ENCODE measurements at regions of chr2 and their contacts with region 1.

Region 1: GRCh38 chr2:218360447-218360846 is 3.8 kb downstream of the CATIP start:
- DNase-seq: no peak
- H3K4me3 ChIP-seq: no peak overlapping the region
- H3K4me3 Mint-ChIP-seq: no peak overlapping the region
- H3K27ac ChIP-seq: no peak overlapping the region
- H3K27ac Mint-ChIP-seq: no peak overlapping the region
- H3K4me1 ChIP-seq: peaks cover 6% of the 10 kb centered on the region
- H3K4me1 Mint-ChIP-seq: peaks cover 0 to 4% (median 2%) of the 10 kb centered on the region in 4 donors
- H3K27me3 ChIP-seq: no peaks in the 10 kb centered on the region
- H3K27me3 Mint-ChIP-seq: no peaks in the 10 kb centered on the region

Region 2: DNA sequence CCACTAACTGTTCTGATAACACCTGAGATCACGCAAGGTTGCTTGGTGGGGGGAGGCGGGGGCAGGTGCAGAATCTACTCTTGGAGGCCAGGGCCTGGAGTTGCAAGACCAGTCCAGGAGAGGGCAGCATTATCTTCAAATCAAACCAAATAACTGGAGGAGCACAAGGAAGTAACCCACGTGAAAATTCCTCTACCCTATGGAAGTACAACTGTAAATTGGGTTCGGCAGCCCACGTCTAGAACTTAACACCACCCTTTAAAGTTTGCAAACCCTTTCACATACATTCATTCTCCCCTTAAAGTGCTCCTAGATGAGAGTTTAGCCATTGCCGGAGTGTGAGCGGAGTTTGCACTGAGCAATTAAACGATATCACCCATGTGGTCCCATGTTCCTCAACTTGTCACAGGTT is 174.1 kb before region 1 on chr2:
- CTCF ChIA-PET with region 1: interaction called, 5 read pairs
- POLR2A ChIA-PET with region 1: interaction called, 3 read pairs
- intact Hi-C with region 1: loop called (anchors 1 kb)
- DNase-seq: peak; percentile 68 to 79 (median 73)
- H3K4me3 ChIP-seq: no peak overlapping the region
- H3K4me3 Mint-ChIP-seq: peak overlapping the region in 1 of 8 donors; percentile 3
- H3K27ac ChIP-seq: no peak overlapping the region
- H3K27ac Mint-ChIP-seq: peak overlapping the region in 2 of 7 donors; percentile 24 to 44
- H3K4me1 ChIP-seq: peaks cover 8% of the 10 kb centered on the region
- H3K4me1 Mint-ChIP-seq: peaks cover 5 to 8% (median 7%) of the 10 kb centered on the region in 4 donors
- H3K27me3 ChIP-seq: no peaks in the 10 kb centered on the region
- H3K27me3 Mint-ChIP-seq: peaks cover 0 to 1% of the 10 kb centered on the region in 2 donors

Region 3: GRCh38 chr2:218252509-218253231 is 107.8 kb before region 1 on chr2:
- CTCF ChIA-PET with region 1: no interaction called
- POLR2A ChIA-PET with region 1: no interaction called
- intact Hi-C with region 1: no loop called
- DNase-seq: no peak
- H3K4me3 ChIP-seq: no peak overlapping the region
- H3K4me3 Mint-ChIP-seq: no peak overlapping the region
- H3K27ac ChIP-seq: no peak overlapping the region
- H3K27ac Mint-ChIP-seq: peak overlapping the region in 6 of 7 donors; percentile 17 to 53 (median 34)
- H3K4me1 ChIP-seq: peaks cover 9% of the 10 kb centered on the region
- H3K4me1 Mint-ChIP-seq: peaks cover 9 to 22% (median 13%) of the 10 kb centered on the region in 4 donors
- H3K27me3 ChIP-seq: no peaks in the 10 kb centered on the region
- H3K27me3 Mint-ChIP-seq: no peaks in the 10 kb centered on the region

Region 4: DNA sequence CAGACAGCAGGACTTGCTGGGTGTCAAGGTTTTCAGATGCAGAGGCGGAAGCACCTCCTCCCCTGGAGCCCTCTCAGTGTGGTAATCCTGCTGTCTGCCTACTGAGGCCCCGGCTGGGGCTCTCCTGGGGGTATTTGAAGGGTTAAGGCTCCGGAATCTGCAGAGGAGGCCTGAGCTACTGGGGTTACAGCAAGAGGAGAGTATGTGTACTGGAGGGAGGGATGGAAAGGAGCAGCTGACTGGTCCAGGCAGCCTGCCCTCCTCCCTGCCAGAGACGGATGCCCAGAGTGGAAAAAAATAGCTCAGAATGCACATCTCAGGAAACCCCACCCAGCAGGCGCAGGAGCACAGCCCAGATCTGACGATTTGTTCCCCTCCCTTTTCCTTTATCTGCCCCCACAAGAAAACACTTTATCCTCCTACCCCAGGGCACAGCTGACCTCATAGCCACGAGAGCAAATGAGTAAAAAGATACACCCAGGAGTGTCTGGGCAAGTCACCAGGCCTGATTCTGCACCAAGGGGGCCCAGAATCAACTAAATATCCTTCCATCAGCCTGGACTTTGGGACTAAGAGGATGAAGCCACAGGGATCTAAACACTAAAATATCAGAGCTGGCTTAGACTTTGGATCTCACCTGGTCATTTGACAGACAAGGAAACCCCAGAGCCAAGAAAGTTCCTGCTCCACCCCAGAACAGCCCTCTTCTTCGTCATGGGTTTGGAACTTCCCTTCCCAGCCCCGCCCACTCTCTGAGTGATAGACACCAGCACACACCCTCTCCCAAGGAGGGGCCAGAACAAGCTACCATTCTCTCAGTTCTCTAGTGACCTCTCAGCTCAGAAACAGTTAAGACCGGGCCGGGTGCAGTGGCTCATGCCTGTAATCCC is 73.6 kb before region 1 on chr2:
- CTCF ChIA-PET with region 1: interaction called, 151 read pairs
- POLR2A ChIA-PET with region 1: interaction called, 14 read pairs
- intact Hi-C with region 1: loop called (anchors 1 kb)
- DNase-seq: peak; percentile 84 to 97 (median 87)
- H3K4me3 ChIP-seq: peak overlapping the region; percentile 53 to 86
- H3K4me3 Mint-ChIP-seq: peak overlapping the region; percentile 90 to 97 (median 91)
- H3K27ac ChIP-seq: peak overlapping the region; percentile 94
- H3K27ac Mint-ChIP-seq: peak overlapping the region; percentile 98 to 100 (median 99)
- H3K4me1 ChIP-seq: peaks cover 92% of the 10 kb centered on the region
- H3K4me1 Mint-ChIP-seq: peaks cover 55 to 95% (median 73%) of the 10 kb centered on the region in 4 donors
- H3K27me3 ChIP-seq: no peaks in the 10 kb centered on the region
- H3K27me3 Mint-ChIP-seq: no peaks in the 10 kb centered on the region

Region 5: DNA sequence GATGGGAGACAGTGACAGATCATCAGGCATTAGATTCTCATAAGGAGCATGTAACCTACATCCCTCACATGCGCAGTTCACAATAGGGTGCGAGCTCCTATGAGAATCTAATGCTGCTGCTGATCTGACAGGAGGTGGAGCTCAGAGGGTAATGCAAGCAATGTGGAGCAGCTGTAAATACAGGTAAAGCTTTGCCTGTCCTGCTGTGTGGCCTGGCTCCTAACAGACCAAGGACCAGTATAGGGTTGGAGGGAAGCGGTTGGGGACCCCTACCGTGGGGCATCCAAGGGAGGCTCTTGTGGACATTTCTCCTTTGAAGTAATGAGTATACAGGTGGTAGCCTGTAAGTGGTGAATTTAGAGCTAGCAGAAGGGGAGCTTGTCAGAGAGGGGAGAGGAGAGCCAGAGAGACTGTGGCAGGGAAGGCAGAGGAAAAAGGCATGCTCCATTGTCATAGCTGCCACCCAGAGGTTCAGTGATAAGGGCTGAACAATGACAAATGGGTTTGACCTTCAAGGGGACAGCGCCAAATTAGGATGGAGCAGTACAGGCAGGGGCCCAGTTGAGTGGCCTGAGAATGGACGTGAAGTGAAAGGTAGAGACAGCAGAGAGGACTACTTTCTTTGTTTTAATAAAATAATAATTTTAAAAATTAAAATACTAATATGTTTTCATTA is 52.9 kb before region 1 on chr2:
- CTCF ChIA-PET with region 1: interaction called, 136 read pairs
- POLR2A ChIA-PET with region 1: interaction called, 3 read pairs
- intact Hi-C with region 1: no loop called
- DNase-seq: no peak
- H3K4me3 ChIP-seq: no peak overlapping the region
- H3K4me3 Mint-ChIP-seq: no peak overlapping the region
- H3K27ac ChIP-seq: no peak overlapping the region
- H3K27ac Mint-ChIP-seq: peak overlapping the region in 1 of 7 donors; percentile 29
- H3K4me1 ChIP-seq: no peaks in the 10 kb centered on the region
- H3K4me1 Mint-ChIP-seq: peaks cover 2 to 5% (median 3%) of the 10 kb centered on the region in 4 donors
- H3K27me3 ChIP-seq: no peaks in the 10 kb centered on the region
- H3K27me3 Mint-ChIP-seq: peaks cover 0 to 1% of the 10 kb centered on the region in 2 donors

Region 6: GRCh38 chr2:218319813-218320365 is 40.6 kb before region 1 on chr2:
- CTCF ChIA-PET with region 1: interaction called, 26 read pairs
- POLR2A ChIA-PET with region 1: interaction called, 4 read pairs
- intact Hi-C with region 1: loop called (anchors 5 kb)
- DNase-seq: no peak
- H3K4me3 ChIP-seq: no peak overlapping the region
- H3K4me3 Mint-ChIP-seq: peak overlapping the region in 1 of 8 donors; percentile 46
- H3K27ac ChIP-seq: no peak overlapping the region
- H3K27ac Mint-ChIP-seq: peak overlapping the region in 2 of 7 donors; percentile 8 to 80
- H3K4me1 ChIP-seq: peaks cover 48% of the 10 kb centered on the region
- H3K4me1 Mint-ChIP-seq: peaks cover 33 to 69% (median 50%) of the 10 kb centered on the region in 4 donors
- H3K27me3 ChIP-seq: no peaks in the 10 kb centered on the region
- H3K27me3 Mint-ChIP-seq: no peaks in the 10 kb centered on the region

Region 7: GRCh38 chr2:218438601-218438995 is 78.2 kb after region 1 on chr2:
- CTCF ChIA-PET with region 1: no interaction called
- POLR2A ChIA-PET with region 1: no interaction called
- intact Hi-C with region 1: no loop called
- DNase-seq: no peak
- H3K4me3 ChIP-seq: no peak overlapping the region
- H3K4me3 Mint-ChIP-seq: no peak overlapping the region
- H3K27ac ChIP-seq: no peak overlapping the region
- H3K27ac Mint-ChIP-seq: peak overlapping the region in 2 of 7 donors; percentile 64 to 68
- H3K4me1 ChIP-seq: no peaks in the 10 kb centered on the region
- H3K4me1 Mint-ChIP-seq: peaks cover 0 to 2% (median under 1%) of the 10 kb centered on the region in 4 donors
- H3K27me3 ChIP-seq: no peaks in the 10 kb centered on the region
- H3K27me3 Mint-ChIP-seq: no peaks in the 10 kb centered on the region